Gastrocnemius medialis (tissue), 4 donors: ENCODE measurements at regions of chr3 and their contacts with region 1.

Region 1: DNA sequence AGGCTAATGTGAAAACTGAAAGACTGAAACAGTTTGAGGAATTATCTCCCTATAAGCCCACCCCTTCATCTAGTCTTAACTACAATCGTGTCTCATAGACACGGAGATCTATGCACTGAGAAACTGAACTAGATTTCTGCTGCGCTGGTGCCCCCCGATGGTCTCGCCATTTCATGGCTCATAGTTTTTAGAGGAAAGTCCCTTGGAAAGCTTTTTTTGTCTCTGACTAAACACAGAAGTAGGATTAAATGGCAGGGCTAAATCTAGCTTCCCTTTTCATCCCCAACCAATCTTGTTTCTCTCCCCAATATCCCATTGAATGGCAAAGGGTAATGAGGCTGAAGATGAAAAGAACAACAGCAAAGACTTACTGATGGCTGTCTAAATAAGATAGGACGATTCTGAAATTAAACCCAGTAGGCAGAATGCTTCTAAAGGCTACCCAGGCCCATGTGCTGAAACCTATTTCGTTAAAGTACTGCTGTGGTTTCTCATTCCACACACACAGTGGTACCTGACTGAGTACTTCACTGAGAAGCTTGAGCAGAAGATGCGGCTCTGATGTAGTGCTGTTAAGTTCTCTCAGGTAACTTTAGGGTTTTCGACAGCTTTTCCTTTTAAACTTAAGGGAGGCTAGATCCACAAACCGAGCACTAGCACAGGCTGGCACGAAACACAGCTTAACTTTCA is 142.7 kb downstream of the GADL1 start:
- DNase-seq: no peak
- ATAC-seq: no peak
- H3K4me3 ChIP-seq: no peak overlapping the region
- H3K27ac ChIP-seq: peak overlapping the region in 1 of 4 donors; percentile 64
- H3K4me1 ChIP-seq: peaks cover 12 to 34% of the 10 kb centered on the region in 2 donors
- H3K27me3 ChIP-seq: no peaks in the 10 kb centered on the region
- CTCF ChIP-seq: no peak
- POLR2A ChIP-seq: no peak

Region 2: GRCh38 chr3:30042274-30042859 is 709.4 kb before region 1 on chr3:
- in situ Hi-C with region 1: no loop called
- intact Hi-C with region 1: loop called (anchors 1 kb)
- DNase-seq: peak; percentile 18 to 23
- ATAC-seq: peak in 1 of 2 donors; percentile 46
- H3K4me3 ChIP-seq: no peak overlapping the region
- H3K27ac ChIP-seq: no peak overlapping the region
- H3K4me1 ChIP-seq: peaks cover 0 to 4% of the 10 kb centered on the region in 2 donors
- H3K27me3 ChIP-seq: no peaks in the 10 kb centered on the region
- CTCF ChIP-seq: peak; percentile 63 to 78 (median 72)
- POLR2A ChIP-seq: no peak

Region 3: DNA sequence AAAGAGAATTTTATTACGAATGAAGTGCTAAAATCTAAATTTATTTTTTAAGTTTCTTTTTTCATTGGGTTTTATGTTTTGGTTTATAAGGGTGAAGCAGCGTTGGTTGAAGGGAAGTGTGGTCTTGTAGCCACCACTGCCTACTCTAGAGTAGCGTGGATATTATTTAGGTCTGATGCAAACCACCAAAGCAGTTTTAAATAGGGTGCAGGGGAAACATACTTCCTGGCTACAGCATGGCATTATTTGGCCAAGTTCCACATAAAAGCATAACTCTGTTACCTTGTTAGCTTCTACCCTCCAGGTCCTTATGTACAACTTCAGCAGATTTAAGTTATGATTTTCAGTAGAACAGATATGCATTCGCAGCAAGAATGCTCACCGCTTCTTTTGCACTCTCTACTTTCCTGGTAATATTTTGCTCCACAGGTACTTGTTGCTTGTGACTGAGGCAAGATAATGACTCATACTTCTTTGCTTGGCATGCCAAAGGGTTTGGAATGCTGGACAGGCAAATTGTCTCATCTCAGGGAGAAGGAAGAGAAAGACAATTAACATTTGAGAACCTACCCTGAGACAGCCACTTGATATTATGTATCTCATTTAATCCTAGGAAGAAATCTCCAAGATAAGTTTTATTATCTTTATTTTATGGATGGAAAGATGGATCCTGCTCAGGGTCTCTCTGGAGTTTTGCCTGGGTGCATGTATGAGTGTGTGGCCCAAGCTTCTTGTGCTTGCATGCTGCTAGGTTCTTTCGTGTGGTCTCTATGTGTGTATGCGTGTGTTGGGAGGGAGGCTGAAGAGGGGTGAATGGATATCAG is 139.9 kb before region 1 on chr3:
- in situ Hi-C with region 1: no loop called
- intact Hi-C with region 1: no loop called
- DNase-seq: no peak
- ATAC-seq: peak; percentile 36 to 47
- H3K4me3 ChIP-seq: no peak overlapping the region
- H3K27ac ChIP-seq: peak overlapping the region; percentile 17 to 93 (median 86)
- H3K4me1 ChIP-seq: peaks cover 8 to 66% of the 10 kb centered on the region in 2 donors
- H3K27me3 ChIP-seq: no peaks in the 10 kb centered on the region
- CTCF ChIP-seq: no peak
- POLR2A ChIP-seq: no peak

Region 4: GRCh38 chr3:30886888-30887287 is 135.1 kb after region 1 on chr3:
- in situ Hi-C with region 1: no loop called
- intact Hi-C with region 1: no loop called
- DNase-seq: no peak
- ATAC-seq: no peak
- H3K4me3 ChIP-seq: no peak overlapping the region
- H3K27ac ChIP-seq: no peak overlapping the region
- H3K4me1 ChIP-seq: peaks cover 5 to 6% of the 10 kb centered on the region in 2 donors
- H3K27me3 ChIP-seq: no peaks in the 10 kb centered on the region
- CTCF ChIP-seq: no peak
- POLR2A ChIP-seq: no peak